Activated B cell treated with CpG ODN at 0.5 μM for 24 hours (primary cell): ENCODE measurements at regions of chr17 and their contacts with region 1.

Region 1: GRCh38 chr17:42019509-42020404 is at the start of gene NKIRAS2:
- DNase-seq: peak; percentile 91
- ATAC-seq: peak; percentile 77
- H3K4me3 Mint-ChIP-seq: peak within 1 kb of the TSS; percentile 100
- H3K27ac Mint-ChIP-seq: peak within 1 kb of the TSS; percentile 82
- H3K4me1 Mint-ChIP-seq: peaks cover 70% of the 10 kb centered on the region
- H3K27me3 Mint-ChIP-seq: no peaks in the 10 kb centered on the region
- CTCF ChIP-seq: no peak
- total RNA-seq, gene NKIRAS2: 23.9 and 25.8 TPM in 2 replicates

Region 2: DNA sequence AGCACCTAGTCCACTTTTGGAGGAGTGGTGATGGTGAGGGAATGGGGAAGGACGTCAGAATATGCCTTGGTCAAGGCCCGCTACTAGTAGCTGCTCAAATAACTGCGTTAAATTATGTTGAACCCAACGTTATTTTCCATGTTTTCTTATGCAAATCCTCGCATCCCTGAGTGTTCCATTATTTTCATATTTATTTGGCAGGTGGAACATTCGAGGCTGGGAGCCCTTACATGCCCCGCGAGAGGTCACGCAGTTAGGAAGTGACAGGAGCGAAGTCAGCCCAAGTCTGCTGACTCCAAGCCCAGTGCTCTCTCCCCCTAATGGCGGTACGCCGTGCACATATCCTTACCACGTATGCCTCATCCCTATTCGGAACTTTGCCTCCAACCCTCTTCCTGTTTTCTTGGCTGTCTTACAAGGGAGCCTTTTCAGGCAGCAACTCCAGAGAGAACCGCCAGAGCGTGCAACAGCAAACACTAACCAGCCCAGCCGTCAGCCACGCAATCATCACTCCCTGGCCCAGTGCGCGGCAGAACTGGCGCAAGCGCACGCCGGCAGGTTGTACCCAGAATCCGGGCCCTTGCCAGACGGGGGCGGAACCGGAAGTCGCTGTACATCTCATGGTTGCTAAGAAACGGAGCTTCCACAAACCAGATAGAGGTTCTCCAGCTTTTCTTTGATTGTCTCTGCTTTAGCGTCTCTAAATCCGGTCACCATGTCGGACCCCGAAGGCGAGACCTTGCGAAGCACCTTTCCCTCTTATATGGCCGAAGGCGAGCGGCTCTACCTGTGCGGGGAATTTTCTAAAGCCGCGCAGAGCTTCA is 89.5 kb before region 1 on chr17 and contains the start of gene ODAD4:
- CTCF ChIA-PET with region 1: no interaction called
- POLR2A ChIA-PET with region 1: interaction called, 12 read pairs
- intact Hi-C with region 1: no loop called
- DNase-seq: peak; percentile 89
- ATAC-seq: peak; percentile 98
- H3K4me3 Mint-ChIP-seq: peak within 1 kb of the TSS; percentile 94
- H3K27ac Mint-ChIP-seq: peak within 1 kb of the TSS; percentile 97
- H3K4me1 Mint-ChIP-seq: peaks cover 38% of the 10 kb centered on the region
- H3K27me3 Mint-ChIP-seq: no peaks in the 10 kb centered on the region
- CTCF ChIP-seq: no peak
- total RNA-seq, gene ODAD4: 0.56 and 1.1 TPM in 2 replicates

Region 3: DNA sequence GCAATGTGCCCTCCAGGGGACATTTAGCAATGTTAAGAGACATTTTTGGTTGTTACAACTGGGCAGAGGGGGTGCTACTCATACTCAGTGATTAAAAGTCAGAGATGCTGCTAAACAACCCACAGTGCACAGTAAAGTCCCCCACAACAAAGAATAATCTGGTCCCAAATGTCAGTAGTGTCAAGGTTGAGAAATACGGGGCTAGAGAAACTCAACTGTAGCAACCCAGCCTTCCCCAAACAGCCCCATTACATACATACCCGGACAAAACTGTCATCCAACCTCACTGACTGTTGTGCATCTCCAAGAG is 22.9 kb before region 1 on chr17:
- CTCF ChIA-PET with region 1: interaction called, 3 read pairs
- POLR2A ChIA-PET with region 1: interaction called, 9 read pairs
- intact Hi-C with region 1: loop called (anchors 1 kb)
- DNase-seq: no peak
- ATAC-seq: no peak
- H3K4me3 Mint-ChIP-seq: peak overlapping the region; percentile 4
- H3K27ac Mint-ChIP-seq: peak overlapping the region; percentile 94
- H3K4me1 Mint-ChIP-seq: peaks cover 26% of the 10 kb centered on the region
- H3K27me3 Mint-ChIP-seq: no peaks in the 10 kb centered on the region
- CTCF ChIP-seq: no peak

Region 4: DNA sequence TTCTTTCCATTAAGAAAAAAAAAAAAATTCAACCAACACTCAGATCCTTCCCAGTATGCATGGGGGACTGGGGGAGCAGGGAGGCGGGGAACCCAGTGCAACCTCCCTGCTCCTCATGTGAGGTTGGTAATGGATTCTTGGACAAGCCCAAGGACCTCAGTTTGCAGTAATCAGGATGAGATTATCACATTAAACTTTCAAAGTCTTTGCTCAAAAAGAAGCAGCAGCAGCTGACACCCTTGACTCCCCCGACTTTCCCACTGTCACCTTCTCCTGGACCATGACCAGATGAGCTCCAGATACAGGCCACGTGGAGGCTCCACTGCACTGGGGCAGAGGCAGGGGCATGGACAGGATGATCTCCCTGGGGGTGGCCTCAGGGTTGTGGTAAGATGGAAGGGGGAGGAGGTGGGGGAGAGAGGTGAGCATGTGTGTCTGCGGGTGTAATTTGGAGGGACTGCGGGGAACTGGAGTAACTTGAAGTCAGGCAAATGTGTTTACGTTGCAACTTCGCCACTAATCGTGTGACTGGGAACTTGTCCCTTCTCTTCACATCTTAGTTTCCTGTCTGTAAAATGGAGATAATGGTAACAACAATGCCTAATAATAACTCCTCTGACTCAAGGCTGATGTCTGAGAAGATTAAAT is 58.8 kb after region 1 on chr17:
- CTCF ChIA-PET with region 1: no interaction called
- POLR2A ChIA-PET with region 1: no interaction called
- intact Hi-C with region 1: no loop called
- DNase-seq: no peak
- ATAC-seq: no peak
- H3K4me3 Mint-ChIP-seq: no peak overlapping the region
- H3K27ac Mint-ChIP-seq: no peak overlapping the region
- H3K4me1 Mint-ChIP-seq: no peaks in the 10 kb centered on the region
- H3K27me3 Mint-ChIP-seq: no peaks in the 10 kb centered on the region
- CTCF ChIP-seq: no peak

Region 5: GRCh38 chr17:42112552-42113176 is 92.9 kb after region 1 on chr17 and contains the start of gene DHX58:
- CTCF ChIA-PET with region 1: interaction called, 10 read pairs
- POLR2A ChIA-PET with region 1: interaction called, 46 read pairs
- intact Hi-C with region 1: loop called (anchors 2 kb)
- DNase-seq: peak; percentile 55
- ATAC-seq: peak; percentile 76
- H3K4me3 Mint-ChIP-seq: peak within 1 kb of the TSS; percentile 80
- H3K27ac Mint-ChIP-seq: peak within 1 kb of the TSS; percentile 91
- H3K4me1 Mint-ChIP-seq: peaks cover 57% of the 10 kb centered on the region
- H3K27me3 Mint-ChIP-seq: no peaks in the 10 kb centered on the region
- CTCF ChIP-seq: no peak
- total RNA-seq, gene DHX58: 21.9 and 22.4 TPM in 2 replicates

Region 6: GRCh38 chr17:42155636-42156045 is 135.9 kb after region 1 on chr17:
- CTCF ChIA-PET with region 1: no interaction called
- POLR2A ChIA-PET with region 1: interaction called, 5 read pairs
- intact Hi-C with region 1: loop called (anchors 1 kb)
- DNase-seq: no peak
- ATAC-seq: no peak
- H3K4me3 Mint-ChIP-seq: peak overlapping the region; percentile 95
- H3K27ac Mint-ChIP-seq: peak overlapping the region; percentile 92
- H3K4me1 Mint-ChIP-seq: peaks cover 37% of the 10 kb centered on the region
- H3K27me3 Mint-ChIP-seq: no peaks in the 10 kb centered on the region
- CTCF ChIP-seq: no peak

Region 7: GRCh38 chr17:42227849-42228615 is 208.3 kb after region 1 on chr17:
- CTCF ChIA-PET with region 1: no interaction called
- POLR2A ChIA-PET with region 1: no interaction called
- intact Hi-C with region 1: no loop called
- DNase-seq: no peak
- ATAC-seq: no peak
- H3K4me3 Mint-ChIP-seq: no peak overlapping the region
- H3K27ac Mint-ChIP-seq: no peak overlapping the region
- H3K4me1 Mint-ChIP-seq: no peaks in the 10 kb centered on the region
- H3K27me3 Mint-ChIP-seq: no peaks in the 10 kb centered on the region
- CTCF ChIP-seq: no peak

Region 8: DNA sequence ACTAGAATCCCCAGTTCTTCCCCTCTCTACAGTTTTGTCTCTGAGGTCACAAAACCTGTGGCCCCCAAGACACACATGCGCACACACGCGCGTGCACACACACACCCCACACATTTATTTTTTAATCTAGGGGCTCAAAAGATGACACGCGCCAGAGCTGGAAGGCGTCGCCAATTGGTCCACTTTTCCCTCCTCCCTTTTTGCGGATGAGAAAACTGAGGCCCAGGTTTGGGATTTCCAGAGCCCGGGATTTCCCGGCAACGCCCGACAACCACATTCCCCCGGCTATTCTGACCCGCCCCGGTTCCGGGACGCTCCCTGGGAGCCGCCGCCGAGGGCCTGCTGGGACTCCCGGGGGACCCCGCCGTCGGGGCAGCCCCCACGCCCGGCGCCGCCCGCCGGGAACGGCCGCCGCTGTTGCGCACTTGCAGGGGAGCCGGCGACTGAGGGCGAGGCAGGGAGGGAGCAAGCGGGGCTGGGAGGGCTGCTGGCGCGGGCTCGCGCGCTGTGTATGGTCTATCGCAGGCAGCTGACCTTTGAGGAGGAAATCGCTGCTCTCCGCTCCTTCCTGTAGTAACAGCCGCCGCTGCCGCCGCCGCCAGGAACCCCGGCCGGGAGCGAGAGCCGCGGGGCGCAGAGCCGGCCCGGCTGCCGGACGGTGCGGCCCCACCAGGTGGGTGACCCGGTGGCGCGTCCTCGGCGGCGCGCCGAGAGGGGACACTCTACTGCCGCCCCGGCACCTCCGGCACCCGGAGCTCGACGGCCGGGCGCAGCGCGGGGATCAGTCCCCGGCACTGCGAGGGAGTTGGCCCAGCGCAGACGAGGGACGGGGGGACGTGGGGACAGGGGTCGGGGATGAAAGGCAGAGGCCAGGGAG is 268.4 kb after region 1 on chr17 and contains the start of gene STAT5A:
- CTCF ChIA-PET with region 1: no interaction called
- POLR2A ChIA-PET with region 1: interaction called, 4 read pairs
- intact Hi-C with region 1: loop called (anchors 10 kb)
- DNase-seq: peak; percentile 70
- ATAC-seq: peak; percentile 77
- H3K4me3 Mint-ChIP-seq: peak within 1 kb of the TSS; percentile 94
- H3K27ac Mint-ChIP-seq: peak within 1 kb of the TSS; percentile 97
- H3K4me1 Mint-ChIP-seq: peaks cover 51% of the 10 kb centered on the region
- H3K27me3 Mint-ChIP-seq: no peaks in the 10 kb centered on the region
- CTCF ChIP-seq: no peak
- total RNA-seq, gene STAT5A: 136 and 140 TPM in 2 replicates